Endothelial cell of umbilical vein (primary cell): ENCODE measurements at regions of chr7 and their contacts with region 1.

Region 1: DNA sequence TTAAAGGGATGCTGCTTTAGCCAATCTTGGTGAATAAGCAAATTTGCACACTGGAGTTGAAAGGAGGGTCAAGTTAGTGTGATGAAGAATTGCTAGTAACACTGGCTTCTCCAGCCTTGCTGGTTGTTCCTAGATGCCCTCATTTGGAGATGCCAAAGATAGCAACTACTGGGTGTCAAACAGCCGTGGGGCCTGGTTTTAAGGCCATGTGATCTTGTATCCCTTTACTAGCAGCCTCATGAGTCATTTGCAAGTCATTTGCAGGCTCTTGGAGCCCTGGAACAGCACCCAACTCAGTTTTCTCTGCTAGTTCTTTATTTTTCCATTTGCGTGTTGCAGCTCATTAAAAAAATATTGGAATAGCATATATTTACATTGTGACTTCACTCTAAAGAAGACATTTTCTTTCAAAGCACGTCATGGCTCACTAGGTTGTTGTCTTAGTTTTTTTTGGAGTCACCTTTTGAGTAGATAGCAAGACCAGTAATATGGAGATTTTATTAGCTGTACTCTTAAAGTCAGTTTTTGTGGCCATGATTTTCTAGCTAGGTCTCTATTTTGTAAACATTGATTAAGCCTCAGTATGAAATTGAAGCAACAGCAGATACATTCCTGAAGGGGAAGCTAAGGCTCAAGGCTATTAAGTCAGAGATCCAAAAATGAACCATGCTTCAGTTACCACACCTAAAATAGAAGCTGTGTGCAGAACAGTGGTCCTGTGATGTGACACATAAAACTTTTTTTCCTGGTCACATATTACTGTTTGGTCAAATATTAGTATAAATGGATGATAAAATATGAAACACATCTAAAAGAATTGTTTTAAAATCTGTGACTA is 1.3 kb downstream of the LSMEM1 start:
- DNase-seq: peak; percentile 41
- H3K4me3 ChIP-seq: no peak overlapping the region
- H3K27ac ChIP-seq: peak overlapping the region; percentile 28
- H3K4me1 ChIP-seq: peaks cover 33% of the 10 kb centered on the region
- H3K27me3 ChIP-seq: no peaks in the 10 kb centered on the region
- CTCF ChIP-seq: no peak
- POLR2A ChIP-seq: no peak

Region 2: GRCh38 chr7:112290065-112290464 is 192.0 kb before region 1 on chr7:
- CTCF ChIA-PET with region 1: no interaction called
- POLR2A ChIA-PET with region 1: no interaction called
- dilution Hi-C with region 1: no loop called
- intact Hi-C with region 1: no loop called
- DNase-seq: no peak
- H3K4me3 ChIP-seq: no peak overlapping the region
- H3K27ac ChIP-seq: no peak overlapping the region
- H3K4me1 ChIP-seq: no peaks in the 10 kb centered on the region
- H3K27me3 ChIP-seq: no peaks in the 10 kb centered on the region
- CTCF ChIP-seq: no peak
- POLR2A ChIP-seq: no peak

Region 3: DNA sequence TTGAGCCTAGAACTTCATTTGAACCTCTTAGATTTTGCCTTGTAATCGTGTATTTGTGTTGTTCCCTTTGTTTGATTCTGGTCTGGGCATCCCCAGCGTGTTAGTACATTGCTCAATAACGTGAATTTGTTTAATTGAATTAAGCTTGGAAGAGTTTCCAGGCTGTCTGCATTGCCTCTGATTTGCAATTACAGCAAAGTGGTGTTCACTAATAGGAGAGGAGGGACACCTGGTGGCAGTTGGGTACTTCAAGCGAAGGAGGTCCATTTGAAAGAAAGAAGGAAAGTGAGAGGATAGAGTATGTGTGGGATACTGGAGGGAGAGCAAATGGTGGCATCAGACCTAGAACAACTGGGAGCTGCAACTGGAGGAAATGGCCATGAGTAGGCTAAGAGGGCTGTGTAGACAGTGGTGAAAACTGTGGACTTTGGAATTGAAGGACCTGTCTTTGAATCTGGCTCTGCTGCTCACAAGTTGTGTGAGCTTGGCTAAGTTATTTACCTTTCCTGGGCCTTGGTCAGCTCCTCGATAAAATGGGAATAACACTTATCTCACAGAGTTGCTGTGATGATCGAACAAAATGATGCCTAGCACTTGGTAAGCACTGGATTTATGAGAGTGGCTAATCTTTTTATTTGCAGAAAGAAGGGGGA is 13.9 kb after region 1 on chr7:
- CTCF ChIA-PET with region 1: interaction called, 18 read pairs
- POLR2A ChIA-PET with region 1: no interaction called
- dilution Hi-C with region 1: no loop called
- intact Hi-C with region 1: no loop called
- DNase-seq: peak; percentile 75
- H3K4me3 ChIP-seq: no peak overlapping the region
- H3K27ac ChIP-seq: no peak overlapping the region
- H3K4me1 ChIP-seq: no peaks in the 10 kb centered on the region
- H3K27me3 ChIP-seq: peaks cover 0 to 4% of the 10 kb centered on the region in 2 experiments
- CTCF ChIP-seq: peak; percentile 45 to 58
- POLR2A ChIP-seq: no peak

Region 4: GRCh38 chr7:112556633-112557032 is 74.6 kb after region 1 on chr7:
- CTCF ChIA-PET with region 1: no interaction called
- POLR2A ChIA-PET with region 1: no interaction called
- dilution Hi-C with region 1: no loop called
- intact Hi-C with region 1: no loop called
- DNase-seq: no peak
- H3K4me3 ChIP-seq: no peak overlapping the region
- H3K27ac ChIP-seq: no peak overlapping the region
- H3K4me1 ChIP-seq: no peaks in the 10 kb centered on the region
- H3K27me3 ChIP-seq: peaks cover 3 to 4% of the 10 kb centered on the region in 2 experiments
- CTCF ChIP-seq: no peak
- POLR2A ChIP-seq: no peak